Sciatic nerve (tissue), 2 donors: ENCODE measurements at regions of chr6 and their contacts with region 1.

Region 1: DNA sequence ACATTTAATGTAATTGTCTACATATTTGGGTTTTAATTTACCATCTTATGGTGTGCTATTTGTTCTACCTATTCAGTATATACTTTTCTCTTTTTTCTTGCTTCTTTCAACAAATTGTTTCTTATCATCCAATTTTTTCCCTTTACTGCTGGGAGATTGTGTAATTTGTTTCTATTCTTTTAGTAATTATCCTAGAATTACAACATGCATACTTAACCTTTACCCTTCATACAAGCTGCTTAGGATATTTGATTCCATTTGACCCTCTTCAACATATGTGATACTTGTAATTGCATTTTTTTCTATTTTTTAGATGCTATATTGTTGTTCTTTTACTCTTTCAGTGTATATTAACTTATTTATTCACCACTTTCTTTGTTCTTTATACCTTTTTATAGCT is 15.1 kb upstream of the TBPL1 start:
- DNase-seq: no peak
- ATAC-seq: no peak

Region 2: GRCh38 chr6:133966654-133967329 is 28.9 kb after region 1 on chr6:
- intact Hi-C with region 1: no loop called
- DNase-seq: no peak
- ATAC-seq: no peak

Region 3: DNA sequence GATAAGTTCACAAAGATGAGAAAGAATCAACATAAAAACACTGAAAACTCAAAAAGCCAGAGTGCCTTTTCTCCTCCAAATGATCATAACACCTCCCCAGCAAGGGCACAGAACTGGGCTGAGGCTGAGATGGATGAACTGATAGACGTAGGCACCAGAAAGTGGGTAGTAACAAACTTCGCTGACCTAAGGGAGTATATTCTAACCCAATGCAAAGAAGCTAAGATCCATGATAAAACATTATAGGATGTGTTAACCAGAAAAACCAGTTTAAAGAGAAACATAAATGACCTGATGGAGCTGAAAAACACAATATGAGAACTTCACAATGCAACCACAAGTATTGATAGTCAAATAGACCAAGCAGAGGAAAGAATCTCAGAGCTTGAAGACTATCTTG is 852.3 kb after region 1 on chr6:
- intact Hi-C with region 1: loop called (anchors 5 kb)
- DNase-seq: no peak
- ATAC-seq: no peak